ENCODE measurements at regions of chr13 and their contacts with region 1.

Region 1: GRCh38 chr13:51583875-51584730 is at the start of gene WDFY2:
- DNase-seq: peak; percentile 100
- total RNA-seq, gene WDFY2: 4.9 TPM

Region 2: GRCh38 chr13:51452361-51453206 is 131.5 kb before region 1 on chr13 and contains the start of gene INTS6:
- intact Hi-C with region 1: loop called (anchors 1 kb)
- DNase-seq: peak; percentile 100
- total RNA-seq, gene INTS6: 32.9 TPM

Region 3: GRCh38 chr13:51523082-51523518 is 61.0 kb before region 1 on chr13:
- intact Hi-C with region 1: no loop called
- DNase-seq: no peak

Region 4: DNA sequence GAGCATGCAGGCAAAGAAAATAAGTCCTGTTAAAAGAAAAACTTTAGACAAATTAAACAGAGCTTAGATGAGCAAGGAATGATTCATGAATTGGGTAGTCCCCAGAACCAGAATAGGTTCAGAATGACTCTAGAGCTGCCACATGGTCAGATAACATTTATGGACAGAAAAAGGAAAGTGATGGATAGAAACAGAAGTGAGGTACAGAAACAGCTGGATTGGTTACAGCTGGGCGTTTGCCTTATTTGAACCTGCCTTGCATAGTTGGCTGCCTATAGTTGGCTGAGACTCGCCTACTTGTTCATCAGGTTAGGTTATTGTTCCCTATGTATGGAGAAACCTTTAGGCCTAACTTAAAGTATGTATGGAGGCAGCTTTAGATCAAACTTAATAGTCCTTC is 35.5 kb after region 1 on chr13:
- intact Hi-C with region 1: loop called (anchors 5 kb)
- DNase-seq: no peak

Region 5: GRCh38 chr13:51729866-51730546 is 145.9 kb after region 1 on chr13:
- intact Hi-C with region 1: loop called (anchors 2 kb)
- DNase-seq: no peak

Region 6: DNA sequence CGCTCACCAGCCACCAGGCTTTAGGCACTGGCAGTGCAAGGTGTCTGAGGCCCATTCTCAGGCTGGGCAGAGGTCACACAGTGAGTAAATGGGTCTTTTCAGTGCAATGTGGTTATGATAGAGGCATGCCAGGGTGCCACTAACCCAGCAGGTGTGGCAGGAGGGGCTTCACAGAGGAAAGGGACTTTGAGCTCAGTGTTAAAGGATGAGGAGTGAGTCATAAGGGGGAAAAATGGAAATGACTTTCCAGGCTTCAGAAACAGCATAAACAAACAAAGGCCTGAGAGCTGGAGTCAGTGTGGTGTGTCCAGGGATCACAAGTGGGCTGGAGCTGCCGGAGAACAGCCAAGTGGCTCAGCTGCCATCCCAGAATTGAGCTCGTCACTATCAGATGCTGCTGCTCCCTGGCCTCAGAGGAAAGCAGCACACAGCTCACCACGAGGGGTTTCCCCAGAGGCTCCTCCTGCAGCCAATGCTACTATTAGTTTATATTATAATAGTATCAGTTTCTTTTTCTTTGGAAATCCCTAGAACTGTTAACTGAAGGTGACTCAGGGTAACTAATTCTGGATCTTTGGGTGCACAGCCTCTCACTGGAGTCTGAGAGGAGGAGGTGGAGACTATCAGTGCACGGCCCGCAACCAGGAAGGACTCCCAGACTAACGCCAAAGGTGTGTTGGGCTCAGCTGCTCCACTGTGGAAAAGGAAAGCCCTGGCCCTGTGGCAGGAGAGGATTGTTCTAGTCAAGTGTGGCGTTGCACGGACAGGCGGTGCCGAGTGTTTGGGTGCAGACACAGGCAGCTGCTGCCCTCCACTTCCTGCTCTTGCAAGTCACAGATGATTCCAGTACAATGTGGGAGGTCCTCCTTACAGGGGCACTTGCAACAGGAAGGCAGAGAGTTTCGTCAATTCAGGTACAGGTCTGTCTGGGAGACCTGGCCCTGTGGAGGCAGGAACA is 180.4 kb after region 1 on chr13:
- intact Hi-C with region 1: loop called (anchors 10 kb)
- DNase-seq: peak; percentile 84

Region 7: GRCh38 chr13:51781246-51782022 is 197.3 kb after region 1 on chr13:
- intact Hi-C with region 1: loop called (anchors 5 kb)
- DNase-seq: no peak

Region 8: GRCh38 chr13:51803422-51804294 is 219.6 kb after region 1 on chr13 and contains the start of gene DHRS12:
- intact Hi-C with region 1: loop called (anchors 5 kb)
- DNase-seq: peak; percentile 98
- total RNA-seq, gene DHRS12: 9.8 TPM